ENCODE measurements at regions of chr13 and their contacts with region 1.

Region 1: GRCh38 chr13:53839461-53839860 is 810.8 kb downstream of the OLFM4 start:
- DNase-seq: no peak
- ATAC-seq: no peak

Region 2: DNA sequence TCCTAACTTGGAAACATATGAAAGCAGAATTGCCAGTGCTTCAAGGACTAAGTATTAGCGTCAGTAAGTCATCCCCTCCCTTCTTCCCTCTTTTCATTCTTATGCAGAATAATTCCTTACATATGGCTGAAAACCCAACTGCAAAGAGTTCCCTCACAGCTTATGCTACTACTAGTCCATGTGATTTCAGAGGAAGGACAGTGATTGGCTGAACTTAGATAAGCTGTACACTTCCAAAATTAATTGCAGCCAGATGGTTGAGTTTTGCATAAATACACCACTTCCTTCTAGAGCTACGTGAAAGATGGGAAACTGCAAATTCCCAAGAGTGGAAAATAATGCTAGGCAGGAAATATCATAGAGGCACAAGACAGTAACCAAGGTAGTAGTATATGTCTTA is 80.4 kb before region 1 on chr13:
- intact Hi-C with region 1: no loop called
- DNase-seq: no peak
- ATAC-seq: no peak

Region 3: DNA sequence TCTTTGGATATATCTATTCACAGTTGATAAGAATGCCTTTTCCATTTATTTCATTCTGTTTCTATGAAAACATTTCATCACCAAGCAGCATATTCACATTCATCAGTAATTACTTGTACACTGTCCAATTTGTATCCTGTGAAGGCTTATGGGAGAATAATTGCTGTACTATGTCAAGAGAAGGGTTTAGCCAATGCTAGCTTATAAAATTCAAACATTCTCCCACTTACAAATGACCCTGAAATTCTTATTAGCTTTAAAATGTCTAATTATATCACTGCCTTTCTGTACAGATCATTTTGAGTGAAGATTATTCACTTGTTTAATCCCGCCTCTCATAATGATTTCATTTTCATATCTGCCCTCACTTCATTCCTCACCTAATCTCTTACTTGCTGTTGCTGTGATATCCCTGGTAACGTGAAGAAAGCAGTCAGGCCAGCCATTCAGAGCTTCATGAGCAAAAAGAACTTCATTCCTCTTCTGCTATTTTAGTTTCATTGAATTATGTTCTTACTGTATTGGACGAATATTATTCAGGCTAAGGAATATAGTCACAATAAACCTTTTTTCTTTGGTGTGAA is 32.1 kb before region 1 on chr13:
- intact Hi-C with region 1: loop called (anchors 2 kb)
- DNase-seq: no peak
- ATAC-seq: no peak

Measured in sciatic nerve (tissue), 2 donors.